GM18951 (cell line): ENCODE measurements at regions of chr2 and their contacts with region 1.

Region 1: GRCh38 chr2:56183643-56184499 is at the start of gene CCDC85A:
- POLR2A ChIP-seq: no peak

Region 2: GRCh38 chr2:56108806-56109205 is 75.1 kb before region 1 on chr2:
- in situ Hi-C with region 1: no loop called
- POLR2A ChIP-seq: no peak

Region 3: GRCh38 chr2:56656826-56657225 is 473.0 kb after region 1 on chr2:
- in situ Hi-C with region 1: no loop called
- POLR2A ChIP-seq: no peak

Region 4: DNA sequence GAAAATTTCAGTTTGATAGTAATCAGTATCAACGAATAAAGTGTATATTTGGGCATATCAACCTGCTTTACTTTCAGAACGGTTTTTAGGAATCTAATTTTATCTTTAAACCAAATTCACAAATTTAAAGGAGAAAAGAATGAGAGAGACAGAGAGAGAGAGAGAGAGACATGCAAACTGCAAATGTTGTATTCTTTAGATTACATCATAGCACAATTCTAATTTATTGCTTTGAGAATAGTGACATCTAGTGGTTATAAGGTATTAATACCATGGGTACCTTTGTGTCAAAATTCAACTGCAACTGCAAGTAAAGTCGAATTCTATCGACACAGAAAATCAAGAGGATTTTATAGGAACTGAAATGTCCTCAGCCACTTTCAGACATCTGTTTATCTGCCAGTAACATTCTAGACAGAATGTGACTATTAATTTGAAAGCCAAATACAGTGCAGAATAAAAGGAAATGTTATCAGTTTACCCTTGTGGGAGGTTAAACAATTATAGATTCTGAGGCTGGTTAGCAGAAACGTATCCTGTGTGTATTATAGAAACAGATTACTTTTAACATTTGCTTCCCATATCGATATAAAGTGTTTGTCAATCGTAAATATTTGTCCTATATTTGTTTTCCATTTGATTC is 1332.9 kb after region 1 on chr2:
- in situ Hi-C with region 1: loop called (anchors 25 kb)
- POLR2A ChIP-seq: no peak